Activated CD4-positive, alpha-beta T cell treated with anti-CD3 and anti-CD28 coated beads for 36 hours (primary cell): ENCODE measurements at regions of chr12 and their contacts with region 1.

Region 1: GRCh38 chr12:54993161-54993835 is 8.7 kb upstream of the TESPA1 start:
- DNase-seq: peak; percentile 70
- ATAC-seq: peak; percentile 53
- H3K4me3 Mint-ChIP-seq: no peak overlapping the region
- H3K27ac Mint-ChIP-seq: no peak overlapping the region
- H3K4me1 Mint-ChIP-seq: peaks cover 43% of the 10 kb centered on the region
- H3K27me3 Mint-ChIP-seq: no peaks in the 10 kb centered on the region

Region 2: GRCh38 chr12:54398995-54399793 is 594.1 kb before region 1 on chr12:
- CTCF ChIA-PET with region 1: no interaction called
- POLR2A ChIA-PET with region 1: no interaction called
- intact Hi-C with region 1: no loop called
- DNase-seq: peak; percentile 92
- ATAC-seq: peak; percentile 95
- H3K4me3 Mint-ChIP-seq: no peak overlapping the region
- H3K27ac Mint-ChIP-seq: no peak overlapping the region
- H3K4me1 Mint-ChIP-seq: peaks cover 6% of the 10 kb centered on the region
- H3K27me3 Mint-ChIP-seq: no peaks in the 10 kb centered on the region

Region 3: DNA sequence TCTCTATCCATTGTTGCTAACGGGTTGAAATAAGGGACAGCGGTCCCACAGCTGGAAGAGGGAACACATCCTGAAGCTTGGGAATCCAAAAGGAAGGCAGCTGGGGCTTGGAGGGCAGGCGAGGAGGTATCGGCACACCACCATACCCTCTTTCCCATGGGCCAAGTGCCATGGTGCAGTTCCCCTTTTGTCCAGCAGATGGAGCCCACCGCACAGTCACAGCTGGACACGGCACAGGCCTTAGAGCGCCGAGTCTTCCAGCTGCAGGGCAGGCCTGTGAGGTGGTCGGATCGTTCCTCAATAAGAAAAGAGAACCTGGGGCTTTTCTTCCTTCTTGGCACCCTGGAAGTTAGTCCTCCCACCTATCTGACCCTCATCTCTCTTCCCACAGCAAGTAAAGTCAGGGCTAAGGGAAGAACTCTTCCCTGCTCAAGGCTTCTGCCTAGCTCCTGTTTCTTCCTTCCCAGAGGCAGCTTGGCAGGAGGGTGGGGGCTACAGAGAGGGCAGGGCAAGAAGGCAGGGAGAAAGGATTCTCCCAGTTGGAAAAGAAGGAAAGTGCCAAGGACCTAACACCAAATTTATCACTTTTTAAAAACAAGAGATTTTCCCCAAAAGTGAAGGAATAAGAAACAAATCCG is 413.5 kb before region 1 on chr12:
- CTCF ChIA-PET with region 1: no interaction called
- POLR2A ChIA-PET with region 1: no interaction called
- intact Hi-C with region 1: no loop called
- DNase-seq: peak; percentile 92
- ATAC-seq: peak; percentile 97
- H3K4me3 Mint-ChIP-seq: no peak overlapping the region
- H3K27ac Mint-ChIP-seq: no peak overlapping the region
- H3K4me1 Mint-ChIP-seq: no peaks in the 10 kb centered on the region
- H3K27me3 Mint-ChIP-seq: peaks cover 3% of the 10 kb centered on the region

Region 4: DNA sequence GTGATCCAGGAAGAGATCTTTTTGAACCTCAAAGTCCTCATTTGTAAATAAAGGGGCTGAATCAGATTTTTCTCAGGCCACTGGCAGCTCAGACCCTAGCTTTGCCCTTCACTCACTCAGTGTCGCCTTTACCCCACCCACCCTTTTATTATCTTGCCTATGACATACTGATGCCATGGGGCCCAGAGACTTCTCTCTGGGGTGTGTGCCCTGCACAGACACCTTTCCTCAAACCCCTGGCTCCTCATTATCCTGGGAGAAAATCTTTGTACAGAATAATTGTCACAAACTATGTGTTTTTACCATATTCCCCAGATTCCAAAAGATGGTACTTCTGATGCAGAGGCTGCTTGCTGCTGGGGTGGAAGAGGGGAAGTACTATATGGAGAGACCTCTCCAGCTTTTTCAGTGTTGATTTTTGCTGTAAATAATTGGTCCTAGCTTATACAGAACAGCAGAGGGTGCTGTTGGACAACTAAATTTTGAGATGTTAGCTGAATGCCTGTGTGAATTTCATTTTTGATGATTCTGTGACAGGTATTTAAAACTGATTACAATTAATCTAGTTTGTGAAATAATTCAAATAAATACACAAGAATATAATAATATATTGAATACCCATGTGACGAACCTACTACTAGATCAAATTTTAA is 291.2 kb before region 1 on chr12:
- CTCF ChIA-PET with region 1: interaction called, 10 read pairs
- POLR2A ChIA-PET with region 1: no interaction called
- intact Hi-C with region 1: no loop called
- DNase-seq: no peak
- ATAC-seq: peak; percentile 58
- H3K4me3 Mint-ChIP-seq: no peak overlapping the region
- H3K27ac Mint-ChIP-seq: no peak overlapping the region
- H3K4me1 Mint-ChIP-seq: no peaks in the 10 kb centered on the region
- H3K27me3 Mint-ChIP-seq: no peaks in the 10 kb centered on the region

Region 5: DNA sequence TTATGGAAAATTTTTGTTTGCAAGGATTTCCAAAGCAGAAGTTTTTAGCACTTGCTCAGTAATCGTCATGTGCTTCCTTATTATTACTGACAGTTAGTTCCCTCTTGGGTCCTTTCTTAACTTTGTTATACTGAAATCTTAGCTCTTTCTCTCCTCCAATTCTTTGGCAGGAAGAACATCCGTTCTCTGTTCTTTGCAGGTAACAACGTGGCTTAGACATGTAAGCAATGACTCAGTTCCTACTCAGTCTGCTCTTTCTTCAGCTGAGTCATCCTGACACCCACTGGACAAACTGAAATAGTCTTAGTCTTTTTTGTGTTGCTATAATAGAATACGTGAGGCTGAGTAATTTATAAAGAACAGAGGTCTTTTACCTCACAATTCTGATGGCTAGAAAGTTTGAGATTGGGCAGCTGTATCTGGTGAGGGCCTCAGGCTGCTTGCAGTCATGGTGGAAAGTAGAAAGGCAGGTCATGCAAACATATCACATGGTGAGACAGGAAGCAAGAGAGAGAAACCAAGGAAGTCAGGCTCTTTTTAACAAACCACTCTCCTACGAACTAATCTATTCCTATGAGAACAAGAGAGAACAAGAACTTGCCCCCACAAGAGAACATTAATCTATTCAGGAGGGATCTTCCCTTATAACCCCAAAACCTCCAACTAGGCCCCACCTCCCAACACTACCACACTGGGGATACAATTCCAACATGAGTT is 57.9 kb before region 1 on chr12:
- CTCF ChIA-PET with region 1: interaction called, 19 read pairs
- POLR2A ChIA-PET with region 1: no interaction called
- intact Hi-C with region 1: loop called in 1 of 2 experiments (anchors 1 kb)
- DNase-seq: peak; percentile 62
- ATAC-seq: peak; percentile 92
- H3K4me3 Mint-ChIP-seq: peak overlapping the region; percentile 45
- H3K27ac Mint-ChIP-seq: peak overlapping the region; percentile 96
- H3K4me1 Mint-ChIP-seq: peaks cover 69% of the 10 kb centered on the region
- H3K27me3 Mint-ChIP-seq: no peaks in the 10 kb centered on the region

Region 6: GRCh38 chr12:54977155-54977554 is 16.1 kb before region 1 on chr12:
- CTCF ChIA-PET with region 1: interaction called, 35 read pairs
- POLR2A ChIA-PET with region 1: no interaction called
- intact Hi-C with region 1: no loop called
- DNase-seq: no peak
- ATAC-seq: no peak
- H3K4me3 Mint-ChIP-seq: peak overlapping the region; percentile 78
- H3K27ac Mint-ChIP-seq: peak overlapping the region; percentile 82
- H3K4me1 Mint-ChIP-seq: peaks cover 88% of the 10 kb centered on the region
- H3K27me3 Mint-ChIP-seq: no peaks in the 10 kb centered on the region

Region 7: DNA sequence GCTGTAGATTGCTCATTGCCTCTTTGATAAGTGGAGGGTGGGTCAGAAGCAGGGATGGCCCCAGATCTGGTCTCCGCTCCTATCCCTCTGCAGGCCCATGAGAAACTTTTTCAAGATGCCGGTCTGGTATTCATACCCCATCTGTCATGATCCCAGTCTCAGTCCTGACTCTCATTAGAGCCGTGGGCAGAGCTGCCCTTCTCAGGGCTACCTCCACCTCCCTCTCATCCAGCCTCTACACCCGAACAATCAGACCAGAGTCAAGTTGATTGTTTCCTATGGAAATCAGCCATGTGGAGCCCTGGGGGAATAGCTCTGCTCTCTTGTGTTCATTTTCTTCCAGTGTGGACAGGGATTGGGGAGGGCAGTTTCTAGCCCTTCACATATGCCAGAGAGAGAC is 72.2 kb after region 1 on chr12:
- CTCF ChIA-PET with region 1: interaction called, 463 read pairs
- POLR2A ChIA-PET with region 1: interaction called, 5 read pairs
- intact Hi-C with region 1: loop called in 1 of 2 experiments (anchors 1 kb)
- DNase-seq: no peak
- ATAC-seq: no peak
- H3K4me3 Mint-ChIP-seq: no peak overlapping the region
- H3K27ac Mint-ChIP-seq: no peak overlapping the region
- H3K4me1 Mint-ChIP-seq: peaks cover 5% of the 10 kb centered on the region
- H3K27me3 Mint-ChIP-seq: peaks cover 4% of the 10 kb centered on the region